A673 (cell line): ENCODE measurements at regions of chr19 and their contacts with region 1.

Region 1: DNA sequence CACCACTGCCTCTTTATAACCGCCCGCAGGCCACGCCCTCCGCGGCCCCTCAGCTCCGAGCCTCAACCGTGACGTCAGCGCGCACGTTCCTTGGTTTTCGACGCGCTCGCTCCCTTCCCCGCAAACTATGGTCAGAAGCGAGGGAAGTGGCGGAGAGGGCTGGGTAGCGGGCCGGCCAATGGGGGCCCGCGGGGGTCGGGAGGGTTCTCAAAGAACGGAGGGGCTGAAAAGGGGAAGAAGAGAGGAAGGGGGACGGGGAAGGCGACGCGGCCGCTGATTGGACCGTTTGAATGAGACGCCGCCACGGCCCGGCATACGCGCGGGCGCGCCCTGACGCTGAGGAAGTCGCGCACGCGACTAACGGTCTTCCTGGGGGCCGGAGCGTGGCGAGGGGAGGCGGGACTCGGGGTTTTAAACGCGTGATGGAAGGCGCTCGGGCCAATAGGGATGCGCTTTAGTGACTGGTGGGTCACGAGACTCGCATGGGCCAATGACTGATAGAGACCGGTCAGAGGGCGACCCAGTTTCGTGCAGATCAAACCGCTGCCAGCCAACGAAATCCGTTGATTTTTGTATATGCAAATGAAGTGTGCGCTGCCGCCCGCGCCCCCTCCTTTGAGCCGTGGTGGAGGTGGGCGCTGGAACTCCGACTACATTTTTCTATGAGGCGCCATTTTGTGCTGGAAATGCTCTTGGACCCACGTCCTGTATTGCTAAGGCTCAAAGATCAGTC is 378 bp upstream of the UBE2S start:
- DNase-seq: peak; percentile 100
- H3K4me3 ChIP-seq: peak overlapping the region; percentile 98
- H3K27ac ChIP-seq: peak overlapping the region; percentile 100
- H3K4me1 ChIP-seq: peaks cover 23% of the 10 kb centered on the region
- H3K27me3 ChIP-seq: no peaks in the 10 kb centered on the region
- CTCF ChIP-seq: no peak

Region 2: DNA sequence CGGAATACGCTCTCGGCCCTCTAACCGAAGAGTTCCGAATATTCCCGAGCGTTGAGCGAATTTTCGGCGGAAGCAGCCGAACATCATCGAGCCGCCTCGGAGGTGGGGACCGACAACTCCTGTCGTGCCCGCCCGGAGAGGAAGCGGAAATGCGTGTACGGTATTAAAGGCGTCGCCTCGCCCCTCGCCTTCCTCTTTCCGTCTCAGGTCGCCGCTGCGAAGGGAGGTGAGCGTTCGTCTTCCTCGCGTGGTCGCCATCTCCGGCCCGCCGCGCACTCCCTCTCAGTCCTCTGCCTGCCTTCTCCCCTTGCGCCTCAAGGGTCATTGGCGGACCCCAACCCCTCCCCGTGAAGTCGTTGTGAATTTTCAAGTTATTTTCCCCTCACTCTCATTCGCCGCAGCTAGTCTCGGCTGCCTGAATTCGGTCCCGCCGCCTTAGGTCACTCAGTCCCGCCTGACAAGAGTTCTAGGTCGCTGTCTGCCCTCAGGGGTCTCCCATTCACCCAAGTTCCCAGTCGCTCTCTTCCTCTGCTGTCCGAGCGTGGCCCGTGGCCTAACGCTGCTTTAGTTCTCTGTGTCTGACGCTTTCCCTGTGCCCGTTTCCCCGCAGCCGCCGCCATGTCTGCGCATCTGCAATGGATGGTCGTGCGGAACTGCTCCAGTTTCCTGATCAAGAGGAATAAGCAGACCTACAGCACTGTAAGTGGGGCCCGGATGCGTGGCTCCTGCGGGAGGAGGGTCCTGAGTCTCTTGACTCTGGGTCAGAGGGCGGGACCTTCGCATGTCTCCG is 22.0 kb before region 1 on chr19 and contains the start of gene RPL28:
- CTCF ChIA-PET with region 1: no interaction called
- POLR2A ChIA-PET with region 1: interaction called, 12 read pairs
- intact Hi-C with region 1: no loop called
- DNase-seq: peak; percentile 99
- H3K4me3 ChIP-seq: peak within 1 kb of the TSS; percentile 98
- H3K27ac ChIP-seq: peak within 1 kb of the TSS; percentile 88
- H3K4me1 ChIP-seq: peaks cover 32% of the 10 kb centered on the region
- H3K27me3 ChIP-seq: no peaks in the 10 kb centered on the region
- CTCF ChIP-seq: no peak
- total RNA-seq, gene RPL28: 1,355 and 1,380 TPM in 2 replicates

Region 3: DNA sequence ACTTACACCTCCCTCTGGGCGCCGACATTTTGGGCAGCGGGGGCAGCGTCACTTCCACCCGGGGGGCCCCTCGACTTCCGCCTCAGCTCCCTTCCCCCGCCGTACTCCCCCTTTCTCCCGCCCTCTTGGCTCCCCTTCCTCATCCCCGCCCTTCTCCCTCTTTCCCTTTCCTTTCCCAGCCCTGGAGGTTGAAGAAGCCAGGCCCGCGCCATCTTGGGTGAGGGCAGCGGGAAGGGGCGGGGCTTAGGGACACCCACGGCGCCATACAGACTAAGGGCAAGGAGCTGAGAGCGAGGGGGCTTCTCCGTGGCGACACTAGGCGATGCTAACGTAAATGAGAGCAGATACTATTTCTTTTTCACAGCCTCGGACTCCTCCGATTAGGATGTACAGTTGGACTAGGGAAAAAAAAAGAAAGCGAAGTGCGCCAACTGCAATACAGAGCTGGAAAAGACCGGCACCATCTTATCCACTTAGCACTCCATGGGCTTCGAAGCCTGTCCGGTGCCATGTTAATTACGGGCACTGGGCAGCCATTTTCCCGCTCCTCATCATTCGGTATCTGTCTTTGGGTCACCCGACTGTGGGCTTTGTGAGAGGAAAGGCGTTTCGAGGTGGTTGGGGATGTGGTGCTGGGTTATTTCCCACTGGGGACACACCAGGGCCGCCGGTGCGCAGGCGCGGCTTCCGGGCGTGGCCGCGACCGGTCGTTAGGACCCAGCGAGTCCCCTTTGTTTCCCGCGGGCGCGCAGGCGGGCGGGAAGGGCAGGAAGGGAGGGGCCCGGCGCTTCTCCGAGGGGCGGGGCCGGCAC is 191.7 kb after region 1 on chr19 and contains the start of gene FIZ1:
- CTCF ChIA-PET with region 1: no interaction called
- POLR2A ChIA-PET with region 1: no interaction called
- intact Hi-C with region 1: loop called (anchors 5 kb)
- DNase-seq: peak; percentile 100
- H3K4me3 ChIP-seq: peak within 1 kb of the TSS; percentile 66
- H3K27ac ChIP-seq: peak within 1 kb of the TSS; percentile 100
- H3K4me1 ChIP-seq: peaks cover 19% of the 10 kb centered on the region
- H3K27me3 ChIP-seq: no peaks in the 10 kb centered on the region
- CTCF ChIP-seq: no peak
- total RNA-seq, gene FIZ1: 27.8 and 29.3 TPM in 2 replicates